CD4-positive, alpha-beta memory T cell (primary cell): ENCODE measurements at regions of chr15 and their contacts with region 1.

Region 1: GRCh38 chr15:67101911-67102598 is 36.7 kb downstream of the SMAD3 start:
- DNase-seq: peak; percentile 57 to 77 (median 66)
- H3K4me3 ChIP-seq: peak overlapping the region; percentile 12 to 28
- H3K4me3 Mint-ChIP-seq: no peak overlapping the region
- H3K27ac ChIP-seq: peak overlapping the region; percentile 75
- H3K27ac Mint-ChIP-seq: no peak overlapping the region
- H3K4me1 ChIP-seq: peaks cover 99% of the 10 kb centered on the region
- H3K4me1 Mint-ChIP-seq: peaks cover 26 to 55% (median 27%) of the 10 kb centered on the region in 4 donors
- H3K27me3 ChIP-seq: no peaks in the 10 kb centered on the region
- H3K27me3 Mint-ChIP-seq: no peaks in the 10 kb centered on the region

Region 2: GRCh38 chr15:67091071-67091979 is 10.7 kb before region 1 on chr15:
- CTCF ChIA-PET with region 1: interaction called, 7 read pairs
- POLR2A ChIA-PET with region 1: interaction called, 220 read pairs
- intact Hi-C with region 1: loop called (anchors 1 kb)
- DNase-seq: peak; percentile 69 to 91 (median 78)
- H3K4me3 ChIP-seq: peak overlapping the region; percentile 21 to 36
- H3K4me3 Mint-ChIP-seq: peak overlapping the region; percentile 73 to 90 (median 82)
- H3K27ac ChIP-seq: peak overlapping the region; percentile 67
- H3K27ac Mint-ChIP-seq: peak overlapping the region in 6 of 7 donors; percentile 93 to 99 (median 96)
- H3K4me1 ChIP-seq: peaks cover 100% of the 10 kb centered on the region
- H3K4me1 Mint-ChIP-seq: peaks cover 65 to 100% (median 89%) of the 10 kb centered on the region in 4 donors
- H3K27me3 ChIP-seq: no peaks in the 10 kb centered on the region
- H3K27me3 Mint-ChIP-seq: no peaks in the 10 kb centered on the region

Region 3: DNA sequence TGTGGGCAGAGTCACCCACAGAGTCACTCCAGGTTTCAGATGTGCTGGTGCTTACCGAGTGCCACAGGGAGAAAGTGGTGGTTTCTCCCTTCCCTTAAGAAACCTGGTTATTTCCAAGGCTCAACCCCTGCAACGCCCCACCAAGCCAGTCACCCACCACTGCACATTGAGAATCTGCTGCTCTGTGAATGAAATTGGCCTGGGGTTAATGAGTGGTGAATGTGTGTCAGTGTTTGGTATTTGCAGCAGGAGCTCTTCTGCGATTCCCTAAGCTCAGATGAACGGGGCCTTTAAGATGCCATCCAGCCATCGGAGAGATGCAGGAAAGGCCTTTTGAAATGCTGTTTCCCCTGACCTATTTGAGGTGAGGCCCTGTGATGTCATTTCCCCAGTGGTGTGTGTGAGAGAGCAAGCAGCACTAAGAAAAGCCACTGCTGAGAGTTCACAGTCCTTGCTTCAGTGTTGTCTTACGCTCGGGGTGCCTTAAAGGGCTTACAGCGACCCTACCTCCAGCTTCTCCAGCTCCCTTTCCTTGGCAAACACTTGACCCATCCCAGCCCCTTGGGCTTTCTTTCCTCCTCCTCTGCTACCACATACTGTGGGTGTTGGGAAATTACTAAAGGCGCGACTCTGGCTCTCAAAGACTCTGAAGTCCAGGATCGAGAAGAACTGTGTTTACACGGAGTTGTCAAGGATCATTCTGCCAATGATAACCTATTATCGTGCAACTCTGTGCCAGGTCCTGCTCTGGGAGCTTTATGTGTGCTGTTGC is 32.2 kb after region 1 on chr15:
- CTCF ChIA-PET with region 1: no interaction called
- POLR2A ChIA-PET with region 1: interaction called, 44 read pairs
- intact Hi-C with region 1: no loop called
- DNase-seq: peak; percentile 81 to 92 (median 85)
- H3K4me3 ChIP-seq: peak overlapping the region; percentile 48 to 73
- H3K4me3 Mint-ChIP-seq: peak overlapping the region; percentile 86 to 97 (median 90)
- H3K27ac ChIP-seq: peak overlapping the region; percentile 85
- H3K27ac Mint-ChIP-seq: peak overlapping the region; percentile 97 to 100 (median 99)
- H3K4me1 ChIP-seq: peaks cover 99% of the 10 kb centered on the region
- H3K4me1 Mint-ChIP-seq: peaks cover 75 to 98% (median 88%) of the 10 kb centered on the region in 4 donors
- H3K27me3 ChIP-seq: no peaks in the 10 kb centered on the region
- H3K27me3 Mint-ChIP-seq: no peaks in the 10 kb centered on the region

Region 4: DNA sequence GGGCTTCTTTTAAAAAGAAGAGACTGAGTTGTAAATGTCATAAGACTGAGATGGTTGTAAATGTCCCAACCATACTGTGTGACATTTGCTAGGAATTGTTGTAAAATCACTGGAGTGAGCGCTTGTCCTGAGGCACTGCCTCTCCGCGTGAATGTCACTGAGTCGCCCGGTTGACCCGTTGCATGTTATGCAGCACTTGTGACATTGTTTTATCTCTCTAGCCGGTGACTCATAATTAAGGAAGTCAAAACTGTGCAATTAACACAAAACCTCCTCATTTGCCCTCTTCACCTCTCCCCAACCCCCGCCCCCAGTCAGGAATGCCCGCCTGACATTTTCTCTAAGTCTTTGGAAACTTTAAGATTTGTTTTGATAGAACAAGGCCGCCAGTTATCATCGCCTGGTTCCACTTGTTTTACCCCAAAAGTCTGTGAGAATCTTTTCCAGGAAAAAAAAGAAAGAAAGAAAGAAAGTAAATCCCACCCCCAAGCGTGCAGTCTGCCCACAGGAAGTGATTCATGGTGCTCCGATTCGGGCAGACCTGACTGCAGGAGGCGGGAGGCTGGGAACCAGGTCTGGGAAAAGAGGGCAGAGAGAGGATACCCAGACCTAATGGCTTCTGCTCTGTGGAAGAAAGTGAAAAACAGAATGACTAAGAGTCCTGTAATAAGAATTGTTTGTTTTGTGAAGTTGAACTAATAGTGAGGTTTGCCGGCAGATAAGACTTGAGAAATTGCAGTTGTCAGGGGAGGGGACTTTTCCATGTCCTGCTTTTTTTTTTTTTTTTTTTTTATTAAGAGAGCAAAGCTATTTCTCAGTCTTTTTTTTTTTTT is 48.2 kb after region 1 on chr15:
- CTCF ChIA-PET with region 1: no interaction called
- POLR2A ChIA-PET with region 1: interaction called, 24 read pairs
- intact Hi-C with region 1: no loop called
- DNase-seq: peak in 1 of 5 donors; percentile 68
- H3K4me3 ChIP-seq: peak overlapping the region; percentile 2 to 23
- H3K4me3 Mint-ChIP-seq: peak overlapping the region; percentile 47 to 90 (median 73)
- H3K27ac ChIP-seq: peak overlapping the region; percentile 27
- H3K27ac Mint-ChIP-seq: peak overlapping the region; percentile 43 to 95 (median 77)
- H3K4me1 ChIP-seq: peaks cover 68% of the 10 kb centered on the region
- H3K4me1 Mint-ChIP-seq: peaks cover 63 to 79% (median 72%) of the 10 kb centered on the region in 4 donors
- H3K27me3 ChIP-seq: no peaks in the 10 kb centered on the region
- H3K27me3 Mint-ChIP-seq: no peaks in the 10 kb centered on the region